Activated B cell treated with CpG ODN at 0.5 μM for 24 hours (primary cell): ENCODE measurements at regions of chr9 and their contacts with region 1.

Region 1: GRCh38 chr9:113657703-113658544 is 194.4 kb downstream of the RGS3 start:
- DNase-seq: peak; percentile 74
- ATAC-seq: peak; percentile 97
- H3K4me3 Mint-ChIP-seq: no peak overlapping the region
- H3K27ac Mint-ChIP-seq: no peak overlapping the region
- H3K4me1 Mint-ChIP-seq: no peaks in the 10 kb centered on the region
- H3K27me3 Mint-ChIP-seq: peaks cover 16% of the 10 kb centered on the region
- CTCF ChIP-seq: peak; percentile 84

Region 2: GRCh38 chr9:113309204-113309813 is 348.6 kb before region 1 on chr9:
- CTCF ChIA-PET with region 1: interaction called, 3 read pairs
- POLR2A ChIA-PET with region 1: no interaction called
- intact Hi-C with region 1: loop called (anchors 1 kb)
- DNase-seq: no peak
- ATAC-seq: no peak
- H3K4me3 Mint-ChIP-seq: no peak overlapping the region
- H3K27ac Mint-ChIP-seq: no peak overlapping the region
- H3K4me1 Mint-ChIP-seq: no peaks in the 10 kb centered on the region
- H3K27me3 Mint-ChIP-seq: peaks cover 2% of the 10 kb centered on the region
- CTCF ChIP-seq: no peak

Region 3: GRCh38 chr9:113446323-113446740 is 211.6 kb before region 1 on chr9:
- CTCF ChIA-PET with region 1: interaction called, 213 read pairs
- POLR2A ChIA-PET with region 1: interaction called, 3 read pairs
- intact Hi-C with region 1: loop called (anchors 1 kb)
- DNase-seq: no peak
- ATAC-seq: peak; percentile 31
- H3K4me3 Mint-ChIP-seq: no peak overlapping the region
- H3K27ac Mint-ChIP-seq: no peak overlapping the region
- H3K4me1 Mint-ChIP-seq: no peaks in the 10 kb centered on the region
- H3K27me3 Mint-ChIP-seq: no peaks in the 10 kb centered on the region
- CTCF ChIP-seq: no peak

Region 4: DNA sequence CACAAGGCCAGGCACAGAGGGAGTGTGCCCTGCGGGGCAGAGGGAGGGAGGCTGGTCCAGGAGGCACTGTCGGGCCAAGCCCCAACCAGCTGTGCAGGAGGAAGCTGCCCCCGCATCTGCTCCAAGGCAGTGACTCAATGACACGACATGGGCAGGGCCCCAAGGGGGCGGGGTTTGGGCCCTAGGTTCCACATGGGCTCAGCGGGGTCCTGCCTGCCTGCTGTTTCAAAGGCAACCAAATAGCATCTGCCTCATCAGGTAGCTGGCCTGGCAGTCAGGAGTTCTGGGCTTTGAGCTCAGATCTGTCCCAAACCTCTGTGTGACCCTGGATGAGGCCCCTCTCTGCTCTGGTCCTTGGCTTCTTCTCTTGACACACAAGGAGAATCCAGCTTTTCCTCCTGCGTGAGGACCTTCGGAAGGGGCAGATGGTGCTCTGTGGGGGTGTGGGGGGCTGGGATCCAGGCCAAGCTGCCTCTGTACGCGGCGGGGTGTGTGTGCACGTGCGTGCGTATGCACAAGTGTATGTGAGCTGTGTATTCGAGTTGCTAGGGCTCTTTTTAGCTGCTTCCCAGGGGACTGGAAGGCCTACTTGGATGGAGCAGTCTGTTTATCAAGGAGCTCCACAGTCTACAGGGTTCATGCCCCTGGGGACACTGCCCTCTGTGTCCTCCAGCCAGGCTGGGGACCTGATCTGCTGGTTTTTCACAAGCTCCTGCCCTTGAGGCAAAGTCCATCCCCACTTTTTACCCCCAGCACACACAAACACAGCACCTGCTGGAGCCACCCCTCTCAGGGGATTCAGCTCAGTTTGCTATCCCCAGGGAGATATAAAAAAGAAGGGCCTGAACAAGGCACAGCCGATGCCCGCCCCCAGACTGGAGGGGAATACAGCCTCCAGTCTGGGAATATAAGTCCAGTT is 55.5 kb before region 1 on chr9:
- CTCF ChIA-PET with region 1: interaction called, 19 read pairs
- POLR2A ChIA-PET with region 1: no interaction called
- intact Hi-C with region 1: no loop called
- DNase-seq: no peak
- ATAC-seq: peak; percentile 89
- H3K4me3 Mint-ChIP-seq: no peak overlapping the region
- H3K27ac Mint-ChIP-seq: no peak overlapping the region
- H3K4me1 Mint-ChIP-seq: peaks cover 12% of the 10 kb centered on the region
- H3K27me3 Mint-ChIP-seq: peaks cover 2% of the 10 kb centered on the region
- CTCF ChIP-seq: no peak

Region 5: GRCh38 chr9:113622600-113623400 is 35.1 kb before region 1 on chr9:
- CTCF ChIA-PET with region 1: interaction called, 5 read pairs
- POLR2A ChIA-PET with region 1: no interaction called
- intact Hi-C with region 1: loop called (anchors 5 kb)
- DNase-seq: peak; percentile 57
- ATAC-seq: peak; percentile 90
- H3K4me3 Mint-ChIP-seq: peak overlapping the region; percentile 58
- H3K27ac Mint-ChIP-seq: peak overlapping the region; percentile 67
- H3K4me1 Mint-ChIP-seq: peaks cover 44% of the 10 kb centered on the region
- H3K27me3 Mint-ChIP-seq: no peaks in the 10 kb centered on the region
- CTCF ChIP-seq: no peak

Region 6: GRCh38 chr9:113675475-113675941 is 17.6 kb after region 1 on chr9:
- CTCF ChIA-PET with region 1: no interaction called
- POLR2A ChIA-PET with region 1: no interaction called
- intact Hi-C with region 1: no loop called
- DNase-seq: no peak
- ATAC-seq: no peak
- H3K4me3 Mint-ChIP-seq: no peak overlapping the region
- H3K27ac Mint-ChIP-seq: no peak overlapping the region
- H3K4me1 Mint-ChIP-seq: peaks cover 8% of the 10 kb centered on the region
- H3K27me3 Mint-ChIP-seq: peaks cover 48% of the 10 kb centered on the region
- CTCF ChIP-seq: no peak